Cardiac septum (tissue), 1 donor: ENCODE measurements at regions of chr4 and their contacts with region 1.

Region 1: DNA sequence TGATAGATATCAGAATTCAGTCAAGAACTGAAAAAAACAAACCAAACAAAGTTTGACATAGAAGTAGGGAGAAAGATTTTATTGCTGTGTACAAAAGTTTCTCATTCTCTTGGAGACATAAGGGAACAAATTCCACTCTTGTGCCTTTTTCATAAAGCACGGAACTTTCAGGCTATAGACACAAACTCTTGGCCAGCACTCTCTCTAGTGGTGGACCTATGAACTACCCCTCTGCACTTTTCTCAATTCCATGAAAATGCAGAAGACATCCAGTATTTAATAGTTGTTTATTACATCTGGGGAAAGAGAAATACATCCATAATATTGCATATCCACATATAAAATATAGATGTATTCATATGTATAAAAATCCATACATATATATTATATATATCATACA is 291.6 kb upstream of the HS3ST1 start:
- DNase-seq: no peak

Region 2: DNA sequence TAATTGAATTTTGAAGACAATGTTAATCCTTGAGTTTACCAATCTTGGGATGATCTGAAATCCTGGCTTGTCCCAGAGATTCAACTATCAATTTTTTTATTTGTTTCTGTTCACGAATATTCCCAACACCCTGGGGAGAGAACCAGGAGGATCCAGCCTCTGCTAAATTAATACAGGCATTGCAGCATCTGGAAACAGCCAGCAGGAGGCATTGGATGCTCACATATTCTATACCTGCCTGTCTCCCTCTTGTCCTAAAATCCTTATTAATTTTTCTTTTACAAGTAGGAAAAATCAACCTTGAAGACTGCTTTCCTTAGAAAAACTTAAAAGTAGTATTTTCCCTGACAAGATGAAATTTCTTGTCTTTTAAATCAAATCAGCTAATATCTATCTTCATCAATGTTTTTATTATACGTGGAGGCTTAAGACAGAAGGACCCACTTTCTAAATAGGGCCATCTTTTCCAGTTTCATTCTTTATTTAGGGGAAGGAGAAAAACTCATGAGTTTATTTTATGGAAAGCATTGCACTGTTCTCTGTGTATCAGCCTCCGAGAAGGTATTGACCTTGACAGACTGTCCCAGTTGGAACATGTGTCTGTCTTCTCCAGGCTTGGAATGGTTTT is 1138.1 kb before region 1 on chr4:
- intact Hi-C with region 1: loop called (anchors 5 kb)
- DNase-seq: no peak